GM13977 (cell line): ENCODE measurements at regions of chr3 and their contacts with region 1.

Region 1: DNA sequence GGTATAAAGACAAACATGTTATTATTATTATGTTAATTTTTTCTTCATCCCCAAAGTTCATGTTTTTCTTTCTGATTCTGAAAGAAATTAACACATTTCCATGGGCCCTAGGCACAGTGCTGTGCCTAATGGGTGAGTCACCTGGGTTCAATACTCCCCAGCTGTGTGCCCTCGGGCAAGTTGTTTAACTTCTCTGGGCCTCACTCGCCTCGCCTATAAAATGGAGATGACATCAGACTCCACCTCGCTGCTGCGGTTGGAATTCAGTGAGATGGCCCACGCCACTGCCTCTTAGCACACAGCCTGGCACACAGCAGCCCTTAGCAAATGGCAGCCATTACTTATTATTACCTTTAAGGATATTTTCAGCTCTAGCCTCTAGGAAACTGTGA is 22.6 kb downstream of the DNASE1L3 start:
- DNase-seq: no peak
- CTCF ChIP-seq: no peak

Region 2: DNA sequence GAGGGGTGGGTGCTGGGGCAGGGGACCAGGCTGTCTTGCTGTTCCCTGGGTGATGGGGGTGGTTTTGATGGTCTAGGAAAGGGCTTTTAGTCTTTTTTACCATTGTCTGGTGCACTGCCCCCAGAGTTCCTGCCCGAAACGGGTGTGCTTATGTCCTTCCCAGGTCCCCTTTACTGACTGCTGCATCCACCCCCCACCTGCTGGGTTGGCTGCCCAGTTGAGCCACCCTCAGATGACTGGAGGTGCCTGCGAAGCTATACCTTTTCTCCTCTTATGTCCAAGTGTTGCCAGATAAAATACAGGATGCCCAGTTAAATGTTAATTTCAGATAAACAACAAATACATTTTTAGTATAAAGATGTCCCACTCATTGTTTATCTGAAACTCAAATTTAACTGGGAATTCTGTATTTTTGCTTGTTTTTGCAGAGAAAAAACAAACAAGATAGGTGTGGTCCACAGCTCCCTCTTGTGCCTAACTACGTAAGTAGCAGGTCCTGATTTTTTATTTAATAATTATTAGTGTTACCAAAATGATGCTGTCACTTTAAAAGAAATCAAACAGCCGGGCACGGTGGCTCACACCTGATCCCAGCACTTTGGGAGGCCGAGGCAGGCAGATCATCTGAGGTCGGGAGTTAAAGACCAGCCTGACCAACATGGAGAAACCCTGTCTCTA is 111.8 kb after region 1 on chr3:
- in situ Hi-C with region 1: loop called (anchors 5 kb)
- DNase-seq: no peak
- CTCF ChIP-seq: peak; percentile 56